ENCODE measurements at regions of chr6 and their contacts with region 1.

Region 1: GRCh38 chr6:158026054-158026900 is 44.6 kb downstream of the SYNJ2 start:
- DNase-seq: peak; percentile 67 to 94 (median 82)
- ATAC-seq: peak; percentile 84
- H3K4me3 ChIP-seq: peak overlapping the region; percentile 44
- H3K4me3 Mint-ChIP-seq: peak overlapping the region; percentile 79 to 86 (median 84)
- H3K27ac ChIP-seq: peak overlapping the region; percentile 73
- H3K27ac Mint-ChIP-seq: peak overlapping the region; percentile 88 to 98 (median 97)
- H3K4me1 ChIP-seq: peaks cover 22 to 23% of the 10 kb centered on the region in 2 donors
- H3K4me1 Mint-ChIP-seq: peaks cover 20 to 40% (median 35%) of the 10 kb centered on the region in 7 donors
- H3K27me3 ChIP-seq: no peaks in the 10 kb centered on the region
- H3K27me3 Mint-ChIP-seq: no peaks in the 10 kb centered on the region

Region 2: DNA sequence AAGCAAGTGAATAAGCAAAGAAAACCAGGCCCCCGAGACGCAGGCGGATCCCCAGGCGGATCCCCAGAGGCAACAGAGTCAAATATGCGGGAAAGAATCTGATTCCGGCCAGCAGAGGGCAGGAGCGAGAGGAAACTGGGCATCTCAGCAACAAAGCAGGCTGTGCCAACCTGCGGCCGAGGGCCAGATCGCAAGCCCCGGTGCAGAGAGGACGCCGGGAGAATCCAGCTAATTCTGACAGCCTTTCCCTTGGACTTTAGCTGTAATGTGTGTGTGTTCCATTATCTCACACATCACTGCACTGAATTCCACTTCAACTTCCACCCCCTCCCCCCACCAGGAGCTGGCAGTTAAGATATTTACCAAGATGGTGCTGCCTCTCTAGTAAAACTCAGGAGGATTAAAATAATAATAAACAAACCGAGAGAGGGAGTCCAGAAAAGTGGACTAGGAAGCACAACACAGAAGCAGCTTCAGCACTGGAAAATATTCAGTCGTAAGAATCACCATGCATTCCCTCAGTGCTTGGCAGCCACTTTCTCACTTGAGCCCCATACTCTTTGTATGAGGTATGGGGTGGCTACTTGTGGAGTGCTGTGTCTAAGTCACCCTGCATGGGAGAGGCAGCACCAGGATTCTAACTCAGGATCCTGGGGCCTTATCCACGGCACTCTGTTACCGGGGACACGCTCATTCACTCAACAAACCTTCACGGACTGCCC is 269.4 kb before region 1 on chr6:
- CTCF ChIA-PET with region 1: interaction called, 5 read pairs
- POLR2A ChIA-PET with region 1: interaction called, 4 read pairs
- intact Hi-C with region 1: loop called in 1 of 2 experiments (anchors 2 kb)
- DNase-seq: peak; percentile 57 to 79 (median 73)
- ATAC-seq: peak; percentile 72
- H3K4me3 ChIP-seq: no peak overlapping the region
- H3K4me3 Mint-ChIP-seq: peak overlapping the region in 9 of 10 donors; percentile 42 to 84 (median 72)
- H3K27ac ChIP-seq: no peak overlapping the region
- H3K27ac Mint-ChIP-seq: peak overlapping the region; percentile 27 to 98 (median 92)
- H3K4me1 ChIP-seq: peaks cover 12 to 55% of the 10 kb centered on the region in 2 donors
- H3K4me1 Mint-ChIP-seq: peaks cover 42 to 83% (median 75%) of the 10 kb centered on the region in 7 donors
- H3K27me3 ChIP-seq: no peaks in the 10 kb centered on the region
- H3K27me3 Mint-ChIP-seq: peaks cover 0 to 42% (median 0%) of the 10 kb centered on the region in 5 donors

Region 3: DNA sequence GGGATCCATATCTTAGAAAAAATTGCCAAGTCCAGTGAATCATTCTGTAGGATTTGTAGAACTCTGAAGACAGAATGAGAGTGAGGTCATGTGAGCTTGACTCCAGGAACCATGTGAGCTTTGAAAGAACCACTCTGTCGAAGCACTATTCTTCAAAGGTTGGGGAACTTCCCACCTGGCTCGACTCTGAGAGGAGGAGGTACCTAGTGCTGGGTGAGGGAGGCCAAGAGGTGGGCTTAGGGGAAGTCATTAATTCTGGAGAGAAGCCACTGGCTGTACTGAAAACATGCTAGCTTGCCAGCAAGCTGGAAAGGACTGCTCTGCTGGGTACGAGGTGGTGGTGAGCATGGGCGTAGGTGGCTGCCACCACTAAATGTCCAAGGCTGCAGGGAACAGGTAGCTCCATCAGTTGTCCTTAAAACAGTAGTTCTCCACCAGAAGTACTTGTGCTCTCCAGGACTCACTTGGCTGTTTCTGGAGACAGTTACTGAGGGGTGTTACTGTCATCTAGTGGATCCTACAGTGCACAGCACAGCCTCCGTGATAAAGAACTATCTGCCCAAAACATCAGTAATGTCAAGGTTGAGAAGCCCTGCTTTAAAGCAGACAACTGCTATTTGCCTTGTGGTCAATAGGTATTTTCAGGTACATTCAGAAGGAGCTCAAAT is 79.3 kb before region 1 on chr6:
- CTCF ChIA-PET with region 1: no interaction called
- POLR2A ChIA-PET with region 1: interaction called, 3 read pairs
- intact Hi-C with region 1: loop called in 1 of 2 experiments (anchors 2 kb)
- DNase-seq: peak in 6 of 9 donors; percentile 11 to 51 (median 32)
- ATAC-seq: peak; percentile 72
- H3K4me3 ChIP-seq: no peak overlapping the region
- H3K4me3 Mint-ChIP-seq: peak overlapping the region in 1 of 10 donors; percentile 42
- H3K27ac ChIP-seq: no peak overlapping the region
- H3K27ac Mint-ChIP-seq: peak overlapping the region in 8 of 9 donors; percentile 8 to 88 (median 52)
- H3K4me1 ChIP-seq: no peaks in the 10 kb centered on the region
- H3K4me1 Mint-ChIP-seq: peaks cover 0 to 24% (median 5%) of the 10 kb centered on the region in 7 donors
- H3K27me3 ChIP-seq: no peaks in the 10 kb centered on the region
- H3K27me3 Mint-ChIP-seq: peaks cover 0 to 20% (median 0%) of the 10 kb centered on the region in 5 donors

Region 4: DNA sequence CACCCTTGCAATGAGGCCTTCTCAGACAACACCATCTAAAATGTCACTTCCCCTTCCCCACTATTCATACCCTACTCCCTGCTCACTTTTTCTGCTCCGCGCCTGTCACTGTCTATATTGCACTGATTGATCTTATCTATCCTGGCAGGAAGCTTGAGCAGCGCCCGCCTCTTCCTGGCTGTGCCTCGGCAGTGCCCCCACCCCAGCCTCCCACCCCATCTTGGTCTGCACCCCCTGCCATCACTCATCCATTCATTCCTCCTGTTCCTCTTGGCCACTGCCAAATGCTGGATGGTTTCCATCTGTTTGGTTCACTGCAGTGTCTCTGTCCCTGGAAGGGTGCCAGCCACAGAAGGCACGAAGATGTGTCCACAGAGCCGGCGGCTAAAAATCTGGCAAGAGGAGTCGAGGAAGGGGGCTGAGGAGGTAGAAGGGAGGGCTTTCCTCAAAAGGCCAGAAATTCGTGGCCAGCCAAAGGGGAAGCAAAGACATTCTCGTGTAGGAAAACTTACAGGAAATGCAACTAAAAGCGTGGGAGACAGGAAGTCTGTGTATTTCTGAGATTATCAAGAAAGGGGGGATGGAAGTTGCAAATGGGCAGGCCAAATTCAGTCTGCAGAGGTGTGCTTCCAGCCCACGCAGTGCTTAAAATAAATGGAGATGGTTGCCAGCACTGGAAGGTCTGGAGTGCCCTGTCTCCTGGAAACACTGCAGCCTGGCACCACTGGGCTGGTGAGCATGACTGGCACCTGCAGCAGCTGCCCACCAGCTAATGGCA is 17.0 kb before region 1 on chr6:
- CTCF ChIA-PET with region 1: interaction called, 21 read pairs
- POLR2A ChIA-PET with region 1: interaction called, 12 read pairs
- intact Hi-C with region 1: loop called in 1 of 2 experiments (anchors 1 kb)
- DNase-seq: peak in 7 of 9 donors; percentile 19 to 53 (median 41)
- ATAC-seq: peak; percentile 54
- H3K4me3 ChIP-seq: peak overlapping the region; percentile 43
- H3K4me3 Mint-ChIP-seq: peak overlapping the region; percentile 70 to 85 (median 80)
- H3K27ac ChIP-seq: peak overlapping the region; percentile 56
- H3K27ac Mint-ChIP-seq: peak overlapping the region; percentile 76 to 97 (median 91)
- H3K4me1 ChIP-seq: peaks cover 18 to 57% of the 10 kb centered on the region in 2 donors
- H3K4me1 Mint-ChIP-seq: peaks cover 62 to 94% (median 85%) of the 10 kb centered on the region in 7 donors
- H3K27me3 ChIP-seq: no peaks in the 10 kb centered on the region
- H3K27me3 Mint-ChIP-seq: no peaks in the 10 kb centered on the region

Region 5: DNA sequence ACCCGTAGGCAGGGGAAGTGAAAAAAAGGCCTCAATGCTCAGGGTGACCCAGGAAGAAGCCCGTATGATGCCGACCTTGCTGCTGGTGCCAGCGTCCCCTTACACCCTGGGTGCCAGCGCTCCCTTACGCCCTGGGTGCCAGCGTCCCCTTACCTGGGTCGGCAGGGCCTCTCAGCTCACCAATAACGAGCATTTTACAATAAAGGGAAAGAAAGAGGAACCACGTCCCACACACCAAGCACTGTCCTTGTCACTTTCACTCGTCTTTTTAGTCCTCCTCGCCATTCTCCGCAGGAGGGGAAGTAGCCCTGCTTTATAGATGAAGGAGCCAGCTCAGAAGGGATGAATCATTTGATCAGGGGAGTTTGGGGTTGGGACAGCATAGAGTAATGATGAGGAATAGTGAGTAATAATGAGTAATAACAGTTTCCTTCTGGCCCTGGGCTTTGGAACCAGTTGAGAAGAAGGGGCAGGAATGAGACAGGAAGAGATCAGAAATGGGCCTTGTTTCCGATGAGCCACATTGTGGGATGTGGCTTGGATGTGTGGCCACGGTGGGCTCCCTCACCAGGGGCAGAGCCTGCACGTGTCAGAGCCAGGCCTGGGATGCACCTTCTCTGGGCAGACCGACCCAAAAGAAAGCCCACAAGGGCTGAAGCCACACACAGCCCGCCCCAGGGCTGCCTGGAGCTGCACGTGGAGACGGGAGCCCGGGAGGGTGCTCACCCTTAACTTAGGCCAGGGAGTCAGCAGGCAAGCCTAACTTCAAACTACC is 31.1 kb after region 1 on chr6:
- CTCF ChIA-PET with region 1: interaction called, 12 read pairs
- POLR2A ChIA-PET with region 1: interaction called, 5 read pairs
- intact Hi-C with region 1: loop called in 1 of 2 experiments (anchors 1 kb)
- DNase-seq: peak in 1 of 9 donors; percentile 43
- ATAC-seq: peak; percentile 83
- H3K4me3 ChIP-seq: no peak overlapping the region
- H3K4me3 Mint-ChIP-seq: peak overlapping the region in 3 of 10 donors; percentile 4 to 46 (median 29)
- H3K27ac ChIP-seq: no peak overlapping the region
- H3K27ac Mint-ChIP-seq: peak overlapping the region in 8 of 9 donors; percentile 49 to 85 (median 70)
- H3K4me1 ChIP-seq: peaks cover 3 to 21% of the 10 kb centered on the region in 2 donors
- H3K4me1 Mint-ChIP-seq: peaks cover 16 to 36% (median 31%) of the 10 kb centered on the region in 7 donors
- H3K27me3 ChIP-seq: no peaks in the 10 kb centered on the region
- H3K27me3 Mint-ChIP-seq: no peaks in the 10 kb centered on the region

Measured in naive thymus-derived CD4-positive, alpha-beta T cell (primary cell).